Activated CD4-positive, alpha-beta T cell treated with anti-CD3 and anti-CD28 coated beads, Interleukin-2, amount 10 ng/mL, durations not matched to agents 24 days and 14 days (primary cell): ENCODE measurements at regions of chr6 and their contacts with region 1.

Region 1: GRCh38 chr6:155188707-155189496 is 74.9 kb upstream of the CLDN20 start:
- DNase-seq: no peak
- H3K4me3 Mint-ChIP-seq: peak overlapping the region; percentile 16
- H3K27ac Mint-ChIP-seq: peak overlapping the region; percentile 91
- H3K4me1 Mint-ChIP-seq: peaks cover 43% of the 10 kb centered on the region
- H3K27me3 Mint-ChIP-seq: no peaks in the 10 kb centered on the region

Region 2: GRCh38 chr6:154995284-154996015 is 193.5 kb before region 1 on chr6 and contains the start of gene TIAM2:
- intact Hi-C with region 1: loop called (anchors 5 kb)
- DNase-seq: peak; percentile 76
- H3K4me3 Mint-ChIP-seq: peak within 1 kb of the TSS; percentile 68
- H3K27ac Mint-ChIP-seq: peak within 1 kb of the TSS; percentile 64
- H3K4me1 Mint-ChIP-seq: peaks cover 15% of the 10 kb centered on the region
- H3K27me3 Mint-ChIP-seq: peaks cover 24% of the 10 kb centered on the region
- total RNA-seq, gene TIAM2: 86.9 and 91.9 TPM in 2 replicates

Region 3: DNA sequence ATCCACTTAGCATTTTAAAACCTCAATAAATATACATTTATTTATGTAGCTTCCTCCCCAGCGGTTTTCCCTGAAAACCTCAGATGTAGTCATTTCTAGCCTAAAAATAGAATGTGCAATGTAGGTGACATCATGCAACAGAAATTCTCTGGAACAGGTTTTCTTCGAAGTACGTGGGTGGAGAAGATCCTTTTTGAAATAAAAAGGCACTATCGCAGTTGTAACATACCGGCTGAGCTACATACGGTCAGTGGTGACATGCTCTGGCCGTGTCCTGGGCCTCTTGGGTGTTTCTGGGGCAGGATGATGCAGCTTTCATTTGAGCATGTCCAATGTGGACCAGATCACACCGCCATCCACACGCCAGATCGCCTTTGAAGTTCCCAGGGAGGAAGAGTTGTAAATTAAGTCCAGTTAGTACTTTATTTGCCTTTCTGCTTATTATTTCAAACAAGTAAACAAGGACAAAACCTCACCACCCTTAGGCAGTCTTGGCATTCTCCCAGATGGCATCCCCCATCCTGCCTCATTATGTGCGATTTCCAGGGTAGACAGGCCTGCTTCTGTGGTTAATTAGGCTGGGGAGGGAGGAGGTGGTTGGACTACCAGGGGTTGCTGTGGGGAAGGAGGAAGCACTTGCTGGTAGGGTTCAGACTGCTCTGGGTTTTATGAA is 34.6 kb before region 1 on chr6:
- intact Hi-C with region 1: loop called (anchors 1 kb)
- DNase-seq: peak; percentile 86
- H3K4me3 Mint-ChIP-seq: peak overlapping the region; percentile 53
- H3K27ac Mint-ChIP-seq: peak overlapping the region; percentile 88
- H3K4me1 Mint-ChIP-seq: peaks cover 73% of the 10 kb centered on the region
- H3K27me3 Mint-ChIP-seq: no peaks in the 10 kb centered on the region

Region 4: GRCh38 chr6:155223646-155224451 is 34.9 kb after region 1 on chr6:
- intact Hi-C with region 1: loop called (anchors 1 kb)
- DNase-seq: peak; percentile 85
- H3K4me3 Mint-ChIP-seq: peak overlapping the region; percentile 56
- H3K27ac Mint-ChIP-seq: peak overlapping the region; percentile 77
- H3K4me1 Mint-ChIP-seq: peaks cover 25% of the 10 kb centered on the region
- H3K27me3 Mint-ChIP-seq: no peaks in the 10 kb centered on the region

Region 5: DNA sequence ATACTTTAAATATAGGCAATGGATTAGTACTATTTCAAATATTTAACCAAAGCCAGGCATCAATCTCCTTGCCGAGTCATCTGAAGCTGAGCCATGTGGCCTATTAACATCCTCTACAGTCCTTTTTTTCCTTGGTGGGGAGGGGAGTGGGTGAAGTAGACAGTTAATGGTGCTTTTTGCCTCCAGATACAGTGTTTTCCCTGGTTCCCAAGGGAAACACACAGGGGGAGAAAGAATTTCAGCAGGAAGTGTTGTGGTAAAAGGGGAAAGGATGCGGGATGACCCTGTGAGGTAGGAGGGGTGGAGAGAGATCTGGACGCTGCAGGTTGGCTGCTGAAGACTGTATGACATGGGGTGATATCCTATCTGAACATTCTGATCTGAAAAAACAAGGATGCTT is 84.5 kb after region 1 on chr6:
- intact Hi-C with region 1: no loop called
- DNase-seq: no peak
- H3K4me3 Mint-ChIP-seq: no peak overlapping the region
- H3K27ac Mint-ChIP-seq: peak overlapping the region; percentile 21
- H3K4me1 Mint-ChIP-seq: peaks cover 4% of the 10 kb centered on the region
- H3K27me3 Mint-ChIP-seq: no peaks in the 10 kb centered on the region

Region 6: DNA sequence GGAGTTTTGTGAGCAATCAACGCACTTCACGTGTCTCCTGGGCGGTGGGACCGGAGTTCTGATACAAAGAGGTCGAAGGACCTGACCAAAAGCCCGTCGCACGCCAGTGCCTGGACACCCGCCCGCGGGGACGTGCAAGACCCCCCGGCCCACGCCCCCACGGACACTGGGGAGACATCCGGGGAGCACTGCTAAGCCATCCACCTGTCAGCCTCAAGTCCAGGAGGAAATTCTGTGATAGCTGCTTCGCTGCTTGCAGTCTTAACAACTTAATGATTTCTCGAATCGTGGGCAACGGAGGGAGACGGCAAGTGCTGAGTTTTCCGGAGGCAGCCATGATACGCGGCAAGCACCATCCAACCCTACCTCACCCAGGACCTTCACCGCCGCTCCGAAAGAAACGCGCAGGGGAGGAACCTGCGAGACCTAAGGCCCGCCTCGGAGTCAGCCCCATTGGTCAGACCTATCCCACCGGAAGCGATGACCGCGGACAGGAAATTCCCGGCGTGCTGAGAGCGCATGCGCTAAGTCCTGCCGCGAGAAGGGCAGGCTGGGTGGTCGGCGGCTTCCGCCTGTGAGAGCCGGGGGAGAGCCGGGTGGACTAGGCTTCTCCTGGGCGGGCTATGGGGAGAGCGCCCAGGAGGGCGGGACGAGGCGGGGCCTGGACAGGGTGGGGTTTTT is 125.3 kb after region 1 on chr6 and contains the start of gene TFB1M:
- intact Hi-C with region 1: loop called (anchors 1 kb)
- DNase-seq: peak; percentile 100
- H3K4me3 Mint-ChIP-seq: peak within 1 kb of the TSS; percentile 99
- H3K27ac Mint-ChIP-seq: peak within 1 kb of the TSS; percentile 98
- H3K4me1 Mint-ChIP-seq: peaks cover 27% of the 10 kb centered on the region
- H3K27me3 Mint-ChIP-seq: peaks cover 2% of the 10 kb centered on the region
- total RNA-seq, gene TFB1M: 36.8 and 41.4 TPM in 2 replicates